Panc1 (cell line): ENCODE measurements at regions of chr12 and their contacts with region 1.

Region 1: GRCh38 chr12:118034429-118035215 is 18.1 kb downstream of the RFC5 start:
- DNase-seq: no peak
- ATAC-seq: peak; percentile 77
- H3K4me3 ChIP-seq: no peak overlapping the region
- H3K27ac ChIP-seq: 0 out of 2 replicates have a peak overlapping the region, but pooled peaks have one; percentile 15
- H3K4me1 ChIP-seq: 0 out of 2 replicates have a peak, but pooled peaks cover 5% of the 10 kb centered on the region
- H3K27me3 ChIP-seq: no peaks in the 10 kb centered on the region
- CTCF ChIP-seq: peak; percentile 69

Region 2: DNA sequence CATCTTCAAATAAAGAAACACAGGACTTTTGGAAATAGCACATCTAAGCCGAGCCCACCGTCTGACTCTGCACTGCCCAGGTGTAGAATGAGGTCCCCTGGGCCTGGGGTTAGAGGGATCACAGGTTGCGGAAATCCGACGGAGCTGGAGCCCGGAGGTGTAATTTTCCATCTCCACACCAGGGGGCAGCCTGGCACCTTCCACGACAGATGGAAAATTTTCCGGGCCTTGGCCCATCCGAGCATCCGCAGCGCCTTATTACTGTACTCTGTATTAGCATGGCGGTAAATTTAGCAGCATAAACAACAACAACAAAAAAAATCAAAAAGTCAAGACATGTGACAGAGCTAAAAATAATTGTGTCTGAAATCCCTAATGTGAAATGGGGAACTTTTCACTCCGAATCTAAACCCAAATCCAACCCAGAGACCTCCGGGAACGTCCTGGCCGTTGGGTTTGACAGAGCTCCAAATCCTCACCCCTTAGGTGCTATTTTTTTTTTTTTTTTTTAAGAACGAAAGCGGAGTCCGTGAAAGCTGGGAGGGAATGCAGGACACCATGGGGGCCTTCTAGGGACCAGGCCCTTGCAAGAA is 159.7 kb before region 1 on chr12:
- CTCF ChIA-PET with region 1: interaction called, 8 read pairs
- POLR2A ChIA-PET with region 1: interaction called, 4 read pairs
- in situ Hi-C with region 1: no loop called
- intact Hi-C with region 1: loop called (anchors 5 kb)
- DNase-seq: no peak
- ATAC-seq: peak; percentile 88
- H3K4me3 ChIP-seq: no peak overlapping the region
- H3K27ac ChIP-seq: no peak overlapping the region
- H3K4me1 ChIP-seq: 0 out of 2 replicates have a peak, but pooled peaks cover 2% of the 10 kb centered on the region
- H3K27me3 ChIP-seq: no peaks in the 10 kb centered on the region
- CTCF ChIP-seq: peak; percentile 95

Region 3: DNA sequence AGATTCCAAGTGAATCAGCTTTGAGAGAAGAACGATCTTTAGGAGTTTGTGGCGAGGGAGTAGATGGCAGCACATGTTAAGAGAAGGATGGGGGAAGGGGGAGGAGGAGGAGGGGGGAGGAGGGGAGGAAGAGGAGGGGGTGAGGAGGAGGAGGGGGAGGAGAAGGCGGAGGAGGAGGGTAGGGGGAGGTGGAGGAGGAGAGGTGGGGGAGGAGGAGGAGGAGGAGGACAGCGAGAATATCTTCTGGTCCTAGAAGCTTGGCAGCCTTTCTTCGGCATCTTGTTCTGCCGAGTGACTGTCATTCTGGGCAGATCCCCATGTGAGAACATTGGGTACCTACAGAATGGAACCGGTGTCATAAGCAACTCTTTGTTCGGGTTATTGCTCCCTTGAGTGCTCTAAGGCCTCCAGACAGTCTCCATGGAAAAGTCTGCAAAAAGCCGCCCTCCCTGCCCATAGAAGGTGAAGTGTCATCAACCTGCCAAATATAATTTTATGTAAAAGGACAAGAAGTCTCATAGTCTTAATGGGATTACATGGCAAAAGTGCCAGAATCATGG is 11.2 kb before region 1 on chr12:
- CTCF ChIA-PET with region 1: no interaction called
- POLR2A ChIA-PET with region 1: interaction called, 10 read pairs
- in situ Hi-C with region 1: no loop called
- intact Hi-C with region 1: no loop called
- DNase-seq: no peak
- ATAC-seq: no peak
- H3K4me3 ChIP-seq: no peak overlapping the region
- H3K27ac ChIP-seq: no peak overlapping the region
- H3K4me1 ChIP-seq: no peaks in the 10 kb centered on the region
- H3K27me3 ChIP-seq: no peaks in the 10 kb centered on the region
- CTCF ChIP-seq: no peak